Calu3 (cell line): ENCODE measurements at regions of chr17 and their contacts with region 1.

Region 1: GRCh38 chr17:40417609-40418427 is at the start of gene TOP2A:
- DNase-seq: peak; percentile 100
- H3K4me3 Mint-ChIP-seq: peak within 1 kb of the TSS; percentile 96
- H3K27ac Mint-ChIP-seq: peak within 1 kb of the TSS; percentile 94
- H3K4me1 Mint-ChIP-seq: peaks cover 42% of the 10 kb centered on the region
- H3K27me3 Mint-ChIP-seq: no peaks in the 10 kb centered on the region
- CTCF ChIP-seq: no peak
- total RNA-seq, gene TOP2A: 1,389 and 1,672 TPM in 2 replicates

Region 2: DNA sequence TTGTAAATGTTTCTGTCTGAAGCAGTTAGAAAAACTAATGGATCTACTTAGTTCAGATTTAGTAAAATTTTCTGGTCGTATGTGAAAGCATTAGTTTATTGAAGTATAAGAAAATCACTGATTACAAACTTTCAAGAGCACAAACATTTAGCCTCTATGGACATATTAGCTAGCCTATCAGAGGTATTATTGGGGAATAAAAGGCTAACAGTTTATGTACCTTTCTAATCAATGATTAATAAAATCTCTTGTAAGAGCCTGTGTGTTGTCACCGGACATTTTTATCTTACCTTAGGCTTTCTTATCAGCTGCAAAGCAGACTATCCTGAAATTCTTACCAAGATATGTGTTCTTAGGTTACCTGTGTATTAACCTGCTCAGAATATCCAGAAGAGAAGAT is 528.6 kb before region 1 on chr17:
- CTCF ChIA-PET with region 1: interaction called, 13 read pairs
- intact Hi-C with region 1: no loop called
- DNase-seq: peak; percentile 82
- H3K4me3 Mint-ChIP-seq: no peak overlapping the region
- H3K27ac Mint-ChIP-seq: no peak overlapping the region
- H3K4me1 Mint-ChIP-seq: peaks cover 26% of the 10 kb centered on the region
- H3K27me3 Mint-ChIP-seq: peaks cover 22% of the 10 kb centered on the region
- CTCF ChIP-seq: no peak

Region 3: DNA sequence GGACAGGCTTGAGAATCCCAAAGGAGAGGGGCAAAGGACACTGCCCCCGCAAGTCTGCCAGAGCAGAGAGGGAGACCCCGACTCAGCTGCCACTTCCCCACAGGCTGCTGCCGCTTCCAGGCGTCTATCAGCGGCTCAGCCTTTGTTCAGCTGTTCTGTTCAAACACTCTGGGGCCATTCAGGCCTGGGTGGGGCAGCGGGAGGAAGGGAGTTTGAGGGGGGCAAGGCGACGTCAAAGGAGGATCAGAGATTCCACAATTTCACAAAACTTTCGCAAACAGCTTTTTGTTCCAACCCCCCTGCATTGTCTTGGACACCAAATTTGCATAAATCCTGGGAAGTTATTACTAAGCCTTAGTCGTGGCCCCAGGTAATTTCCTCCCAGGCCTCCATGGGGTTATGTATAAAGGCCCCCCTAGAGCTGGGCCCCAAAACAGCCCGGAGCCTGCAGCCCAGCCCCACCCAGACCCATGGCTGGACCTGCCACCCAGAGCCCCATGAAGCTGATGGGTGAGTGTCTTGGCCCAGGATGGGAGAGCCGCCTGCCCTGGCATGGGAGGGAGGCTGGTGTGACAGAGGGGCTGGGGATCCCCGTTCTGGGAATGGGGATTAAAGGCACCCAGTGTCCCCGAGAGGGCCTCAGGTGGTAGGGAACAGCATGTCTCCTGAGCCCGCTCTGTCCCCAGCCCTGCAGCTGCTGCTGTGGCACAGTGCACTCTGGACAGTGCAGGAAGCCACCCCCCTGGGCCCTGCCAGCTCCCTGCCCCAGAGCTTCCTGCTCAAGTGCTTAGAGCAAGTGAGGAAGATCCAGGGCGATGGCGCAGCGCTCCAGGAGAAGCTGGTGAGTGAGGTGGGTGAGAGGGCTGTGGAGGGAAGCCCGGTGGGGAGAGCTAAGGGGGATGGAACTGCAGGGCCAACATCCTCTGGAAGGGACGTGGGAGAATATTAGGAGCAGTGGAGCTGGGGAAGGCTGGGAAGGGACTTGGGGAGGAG is 402.5 kb before region 1 on chr17 and contains the start of gene CSF3:
- CTCF ChIA-PET with region 1: interaction called, 12 read pairs
- intact Hi-C with region 1: no loop called
- DNase-seq: peak; percentile 66
- H3K4me3 Mint-ChIP-seq: no peak within 1 kb of the TSS
- H3K27ac Mint-ChIP-seq: no peak within 1 kb of the TSS
- H3K4me1 Mint-ChIP-seq: peaks cover 10% of the 10 kb centered on the region
- H3K27me3 Mint-ChIP-seq: peaks cover 74% of the 10 kb centered on the region
- CTCF ChIP-seq: no peak
- total RNA-seq, gene CSF3: 0.38 TPM in 1 of 2 replicates, not detected in the other

Region 4: GRCh38 chr17:40340880-40341807 is 76.7 kb before region 1 on chr17:
- CTCF ChIA-PET with region 1: interaction called, 35 read pairs
- intact Hi-C with region 1: no loop called
- DNase-seq: peak; percentile 100
- H3K4me3 Mint-ChIP-seq: peak overlapping the region; percentile 89
- H3K27ac Mint-ChIP-seq: peak overlapping the region; percentile 75
- H3K4me1 Mint-ChIP-seq: peaks cover 57% of the 10 kb centered on the region
- H3K27me3 Mint-ChIP-seq: no peaks in the 10 kb centered on the region
- CTCF ChIP-seq: peak; percentile 92

Region 5: DNA sequence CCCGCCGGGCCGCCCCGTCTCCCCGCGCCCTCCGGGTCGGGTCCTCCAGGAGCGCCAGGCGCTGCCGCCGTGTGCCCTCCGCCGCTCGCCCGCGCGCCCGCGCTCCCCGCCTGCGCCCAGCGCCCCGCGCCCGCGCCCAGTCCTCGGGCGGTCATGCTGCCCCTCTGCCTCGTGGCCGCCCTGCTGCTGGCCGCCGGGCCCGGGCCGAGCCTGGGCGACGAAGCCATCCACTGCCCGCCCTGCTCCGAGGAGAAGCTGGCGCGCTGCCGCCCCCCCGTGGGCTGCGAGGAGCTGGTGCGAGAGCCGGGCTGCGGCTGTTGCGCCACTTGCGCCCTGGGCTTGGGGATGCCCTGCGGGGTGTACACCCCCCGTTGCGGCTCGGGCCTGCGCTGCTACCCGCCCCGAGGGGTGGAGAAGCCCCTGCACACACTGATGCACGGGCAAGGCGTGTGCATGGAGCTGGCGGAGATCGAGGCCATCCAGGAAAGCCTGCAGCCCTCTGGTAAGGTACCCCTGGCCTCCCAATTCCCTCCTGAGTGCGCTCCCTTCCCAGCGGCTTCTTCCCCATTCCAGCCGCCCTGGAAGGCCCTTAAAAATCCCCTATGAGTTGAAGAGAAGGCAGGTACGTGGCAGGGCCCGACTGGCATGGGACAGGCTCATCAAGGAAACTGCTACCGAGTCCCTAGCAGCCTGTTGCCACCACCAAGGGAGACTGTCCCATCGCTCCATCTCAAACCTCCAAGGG is 25.9 kb after region 1 on chr17:
- CTCF ChIA-PET with region 1: interaction called, 115 read pairs
- intact Hi-C with region 1: no loop called
- DNase-seq: peak; percentile 100
- H3K4me3 Mint-ChIP-seq: peak overlapping the region; percentile 1
- H3K27ac Mint-ChIP-seq: no peak overlapping the region
- H3K4me1 Mint-ChIP-seq: peaks cover 35% of the 10 kb centered on the region
- H3K27me3 Mint-ChIP-seq: peaks cover 37% of the 10 kb centered on the region
- CTCF ChIP-seq: no peak

Region 6: DNA sequence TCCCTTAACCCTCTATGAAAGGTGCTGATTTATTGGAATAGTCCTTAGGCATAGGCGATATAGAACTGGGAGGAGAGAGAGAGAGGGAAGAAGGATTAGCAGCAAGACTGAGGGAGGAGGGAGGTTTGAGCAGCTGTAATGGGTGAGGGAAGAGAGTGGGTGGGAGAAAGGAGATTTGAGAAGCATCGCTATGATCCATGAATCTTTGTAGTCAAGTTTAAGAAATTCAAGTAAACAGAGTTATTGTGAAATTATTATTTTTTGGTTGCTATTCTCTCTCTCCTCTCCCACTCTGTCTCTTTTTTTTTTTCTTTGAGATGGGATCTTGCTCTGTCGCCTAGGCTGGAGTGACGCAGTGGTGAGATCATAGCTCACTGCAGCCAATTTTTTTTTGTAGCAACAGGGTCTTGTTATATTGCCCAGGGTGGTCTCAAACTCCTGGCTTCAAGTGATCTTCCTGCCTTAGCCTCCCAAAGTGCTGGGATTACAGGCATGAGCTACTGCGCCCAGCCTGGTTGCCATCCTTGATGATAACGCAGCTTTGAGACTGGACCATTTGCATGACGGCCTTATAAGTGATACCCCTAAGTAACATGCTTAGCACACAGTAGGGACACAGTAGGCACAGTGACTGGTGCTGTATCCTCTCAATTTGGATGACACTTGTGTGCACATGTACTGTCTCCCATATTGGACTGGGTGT is 104.6 kb after region 1 on chr17:
- CTCF ChIA-PET with region 1: interaction called, 498 read pairs
- intact Hi-C with region 1: no loop called
- DNase-seq: no peak
- H3K4me3 Mint-ChIP-seq: no peak overlapping the region
- H3K27ac Mint-ChIP-seq: no peak overlapping the region
- H3K4me1 Mint-ChIP-seq: peaks cover 32% of the 10 kb centered on the region
- H3K27me3 Mint-ChIP-seq: peaks cover 30% of the 10 kb centered on the region
- CTCF ChIP-seq: no peak

Region 7: GRCh38 chr17:40699371-40699770 is 281.6 kb after region 1 on chr17:
- CTCF ChIA-PET with region 1: interaction called, 13 read pairs
- intact Hi-C with region 1: no loop called
- DNase-seq: no peak
- H3K4me3 Mint-ChIP-seq: no peak overlapping the region
- H3K27ac Mint-ChIP-seq: no peak overlapping the region
- H3K4me1 Mint-ChIP-seq: peaks cover 46% of the 10 kb centered on the region
- H3K27me3 Mint-ChIP-seq: peaks cover 29% of the 10 kb centered on the region
- CTCF ChIP-seq: no peak